K562 (cell line): ENCODE measurements at regions of chr12 and their contacts with region 1.

Region 1: GRCh38 chr12:68391937-68392336 is 59.8 kb upstream of the MDM1 start:
- DNase-seq: peak in 1 of 4 experiments; percentile 66
- ATAC-seq: peak; percentile 70
- H3K4me3 ChIP-seq: no peak overlapping the region
- H3K27ac ChIP-seq: peak overlapping the region; percentile 15; the same call in 1 of the 3 replicates
- H3K4me1 ChIP-seq: peaks cover 0 to 20% of the 10 kb centered on the region in 2 experiments; a peak in 4 of 5 replicates
- H3K27me3 ChIP-seq: no peaks in the 10 kb centered on the region
- CTCF ChIP-seq: no peak
- EP300 ChIP-seq: peak; percentile 69
- POLR2A ChIP-seq: no peak
- RAD21 ChIP-seq: no peak

Region 2: DNA sequence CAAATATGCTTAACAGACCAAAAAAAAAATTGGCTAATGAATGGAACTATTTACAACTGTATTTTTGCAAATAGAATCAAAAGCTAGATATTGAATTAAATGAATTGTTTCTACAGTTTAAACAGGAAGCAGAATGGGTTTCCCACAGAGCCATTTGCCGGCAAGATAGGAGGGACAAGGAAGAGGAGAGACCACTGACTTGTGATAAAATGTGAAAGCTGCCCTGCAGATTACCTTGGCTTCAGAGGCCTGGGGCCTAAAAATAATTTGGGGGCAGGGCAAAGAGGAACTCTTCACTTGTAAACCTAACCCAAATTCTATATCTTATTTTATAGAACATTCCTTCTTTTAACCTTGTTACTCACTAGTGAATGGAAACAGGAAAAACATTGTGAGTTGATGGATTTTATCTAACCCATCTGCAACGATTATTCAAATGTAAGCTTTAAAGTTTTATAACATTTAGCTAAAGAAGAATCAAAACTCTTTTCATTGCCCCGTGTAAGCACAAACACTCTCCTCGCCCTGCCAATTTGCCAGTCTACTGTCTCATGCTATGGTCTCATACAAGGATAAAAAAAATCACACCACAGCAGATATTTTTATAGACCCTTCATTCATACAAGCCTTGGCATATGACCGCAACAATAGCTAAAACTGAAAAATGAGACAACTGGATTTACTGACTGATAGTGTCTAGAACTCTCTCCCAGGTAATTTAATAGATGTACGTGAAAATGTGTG is 10.3 kb before region 1 on chr12:
- CTCF ChIA-PET with region 1: no interaction called
- POLR2A ChIA-PET with region 1: interaction called, 12 read pairs
- in situ Hi-C with region 1: no loop called
- intact Hi-C with region 1: no loop called
- DNase-seq: peak in 2 of 4 experiments; percentile 44 to 66
- ATAC-seq: peak; percentile 44; the same call in 2 of the 3 replicates
- H3K4me3 ChIP-seq: no peak overlapping the region
- H3K27ac ChIP-seq: peak overlapping the region; percentile 65
- H3K4me1 ChIP-seq: peaks cover 5 to 68% of the 10 kb centered on the region in 2 experiments
- H3K27me3 ChIP-seq: no peaks in the 10 kb centered on the region
- CTCF ChIP-seq: no peak
- EP300 ChIP-seq: peak; percentile 52; the same call in 1 of the 2 replicates
- POLR2A ChIP-seq: no peak
- RAD21 ChIP-seq: no peak

Region 3: GRCh38 chr12:68440068-68440581 is 48.2 kb after region 1 on chr12:
- CTCF ChIA-PET with region 1: no interaction called
- POLR2A ChIA-PET with region 1: no interaction called
- in situ Hi-C with region 1: no loop called
- intact Hi-C with region 1: no loop called
- DNase-seq: peak in 1 of 4 experiments; percentile 12
- ATAC-seq: peak; percentile 61
- H3K4me3 ChIP-seq: no peak overlapping the region
- H3K27ac ChIP-seq: 0 out of 3 replicates have a peak overlapping the region, but pooled peaks have one; percentile 8
- H3K4me1 ChIP-seq: peaks cover 0 to 6% of the 10 kb centered on the region in 2 experiments; a peak in 2 of 5 replicates
- H3K27me3 ChIP-seq: no peaks in the 10 kb centered on the region
- CTCF ChIP-seq: no peak
- EP300 ChIP-seq: no peak
- POLR2A ChIP-seq: no peak
- RAD21 ChIP-seq: no peak